Mammary epithelial cell (primary cell): ENCODE measurements at regions of chr2 and their contacts with region 1.

Region 1: DNA sequence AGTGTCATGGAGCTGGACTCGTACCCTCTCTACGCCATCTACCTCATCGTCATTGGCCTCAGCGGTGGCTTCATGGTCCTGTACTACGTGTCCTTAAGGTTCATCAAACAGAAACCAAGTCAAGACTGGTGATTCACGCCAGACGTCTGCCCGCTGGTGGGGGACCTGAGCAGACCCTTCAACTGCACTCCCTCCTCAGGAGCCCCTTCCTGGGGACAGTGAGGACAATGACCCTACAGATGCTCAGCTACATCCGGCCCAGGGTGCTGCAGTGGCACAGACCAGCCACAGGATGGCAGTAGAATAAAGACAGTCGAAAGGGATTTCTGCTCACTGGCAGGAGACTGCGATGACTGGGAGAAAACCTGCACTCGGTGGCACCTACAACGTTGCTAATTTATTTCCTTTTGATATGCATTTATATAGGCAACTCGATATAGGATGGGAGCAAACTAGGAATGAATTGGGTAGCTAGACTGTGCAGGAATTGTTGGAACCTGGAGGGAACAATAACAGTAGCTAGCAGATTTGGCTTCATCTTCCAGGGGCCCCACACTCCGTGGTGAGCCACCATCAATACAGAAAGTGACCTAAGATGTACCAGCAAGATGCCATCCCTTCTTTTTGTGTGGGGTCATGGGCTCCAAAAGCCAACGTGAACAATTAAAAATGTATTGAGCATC is 39.2 kb downstream of the ABCG8 start:
- DNase-seq: peak; percentile 29
- H3K4me3 ChIP-seq: no peak overlapping the region
- H3K27ac ChIP-seq: no peak overlapping the region
- H3K4me1 ChIP-seq: no peaks in the 10 kb centered on the region
- H3K27me3 ChIP-seq: no peaks in the 10 kb centered on the region
- CTCF ChIP-seq: peak; percentile 92 to 99

Region 2: GRCh38 chr2:43455731-43456642 is 421.9 kb before region 1 on chr2:
- CTCF ChIA-PET with region 1: no interaction called
- dilution Hi-C with region 1: no loop called
- in situ Hi-C with region 1: no loop called
- intact Hi-C with region 1: no loop called
- DNase-seq: peak; percentile 48
- H3K4me3 ChIP-seq: no peak overlapping the region
- H3K27ac ChIP-seq: no peak overlapping the region
- H3K4me1 ChIP-seq: peaks cover 46% of the 10 kb centered on the region
- H3K27me3 ChIP-seq: no peaks in the 10 kb centered on the region
- CTCF ChIP-seq: no peak

Region 3: GRCh38 chr2:44731505-44731904 is 853.6 kb after region 1 on chr2:
- CTCF ChIA-PET with region 1: no interaction called
- dilution Hi-C with region 1: no loop called
- in situ Hi-C with region 1: no loop called
- intact Hi-C with region 1: loop called (anchors 5 kb)
- DNase-seq: no peak
- H3K4me3 ChIP-seq: no peak overlapping the region
- H3K27ac ChIP-seq: no peak overlapping the region
- H3K4me1 ChIP-seq: no peaks in the 10 kb centered on the region
- H3K27me3 ChIP-seq: no peaks in the 10 kb centered on the region
- CTCF ChIP-seq: no peak